ENCODE measurements at regions of chr6 and their contacts with region 1.

Region 1: GRCh38 chr6:10837995-10838793 is at the start of gene MAK:
- DNase-seq: peak; percentile 91
- H3K4me3 Mint-ChIP-seq: peak within 1 kb of the TSS; percentile 73
- H3K27ac Mint-ChIP-seq: peak within 1 kb of the TSS; percentile 98
- H3K4me1 Mint-ChIP-seq: peaks cover 31% of the 10 kb centered on the region
- H3K27me3 Mint-ChIP-seq: peaks cover 40% of the 10 kb centered on the region
- total RNA-seq, gene MAK: 0.87 to 1.1 TPM

Region 2: DNA sequence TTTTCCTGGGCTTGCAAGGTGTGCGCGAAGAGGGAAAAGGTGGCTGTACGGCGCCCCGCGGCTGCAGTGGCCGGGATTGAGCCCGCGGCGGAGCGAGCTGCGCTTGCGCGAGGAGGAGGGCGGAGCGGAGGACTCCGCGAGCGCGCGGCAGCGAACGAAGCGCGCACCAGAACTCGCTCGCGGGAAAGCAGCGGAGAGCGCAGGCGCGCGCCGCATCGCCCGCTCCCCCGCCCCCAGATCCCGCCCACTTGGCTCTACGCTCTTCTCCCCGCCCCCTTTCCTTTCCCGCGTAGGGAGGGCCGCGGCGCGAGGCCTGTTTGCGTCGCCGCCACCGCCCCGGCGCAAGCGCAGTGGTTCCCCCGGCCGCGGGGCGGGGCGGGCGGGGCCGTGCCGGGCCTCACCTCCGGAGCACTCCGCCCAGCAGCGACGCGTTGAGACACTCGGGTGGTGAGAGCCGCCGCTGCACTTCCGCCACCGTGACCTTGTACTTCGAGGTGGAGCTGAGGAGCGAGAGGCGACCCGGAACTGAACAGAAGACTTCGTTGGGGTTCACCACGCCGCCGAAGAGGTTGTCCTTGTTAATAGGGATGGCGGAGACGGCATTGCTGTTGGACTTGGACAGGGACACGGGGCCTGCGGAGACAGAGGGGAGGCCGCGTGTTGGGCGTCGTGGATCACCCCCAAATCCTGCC is 433.9 kb before region 1 on chr6:
- CTCF ChIA-PET with region 1: no interaction called
- POLR2A ChIA-PET with region 1: no interaction called
- intact Hi-C with region 1: loop called (anchors 2 kb)
- DNase-seq: peak; percentile 93
- H3K4me3 Mint-ChIP-seq: peak overlapping the region; percentile 76
- H3K27ac Mint-ChIP-seq: peak overlapping the region; percentile 77
- H3K4me1 Mint-ChIP-seq: peaks cover 10% of the 10 kb centered on the region
- H3K27me3 Mint-ChIP-seq: peaks cover 50% of the 10 kb centered on the region

Region 3: DNA sequence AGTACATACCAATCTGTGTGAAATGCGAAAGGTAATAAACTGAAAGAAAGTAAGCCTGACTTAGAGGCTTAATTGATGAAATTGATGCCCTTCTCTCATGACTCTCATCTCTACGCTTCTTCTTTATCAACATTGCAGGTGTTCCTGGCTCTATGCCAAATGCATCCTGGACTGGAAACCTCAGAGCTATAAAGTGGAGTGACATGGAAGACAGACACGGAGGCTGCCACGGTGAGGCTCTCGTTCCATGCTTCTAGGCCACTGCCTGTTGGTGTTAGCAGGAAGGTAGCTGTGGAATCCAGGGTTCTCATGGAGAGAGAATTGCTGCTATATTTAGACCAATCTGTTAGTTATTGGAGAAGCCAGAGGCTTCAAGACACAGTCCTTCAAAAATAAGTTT is 217.0 kb before region 1 on chr6:
- CTCF ChIA-PET with region 1: no interaction called
- POLR2A ChIA-PET with region 1: no interaction called
- intact Hi-C with region 1: no loop called
- DNase-seq: no peak
- H3K4me3 Mint-ChIP-seq: no peak overlapping the region
- H3K27ac Mint-ChIP-seq: no peak overlapping the region
- H3K4me1 Mint-ChIP-seq: no peaks in the 10 kb centered on the region
- H3K27me3 Mint-ChIP-seq: no peaks in the 10 kb centered on the region

Region 4: DNA sequence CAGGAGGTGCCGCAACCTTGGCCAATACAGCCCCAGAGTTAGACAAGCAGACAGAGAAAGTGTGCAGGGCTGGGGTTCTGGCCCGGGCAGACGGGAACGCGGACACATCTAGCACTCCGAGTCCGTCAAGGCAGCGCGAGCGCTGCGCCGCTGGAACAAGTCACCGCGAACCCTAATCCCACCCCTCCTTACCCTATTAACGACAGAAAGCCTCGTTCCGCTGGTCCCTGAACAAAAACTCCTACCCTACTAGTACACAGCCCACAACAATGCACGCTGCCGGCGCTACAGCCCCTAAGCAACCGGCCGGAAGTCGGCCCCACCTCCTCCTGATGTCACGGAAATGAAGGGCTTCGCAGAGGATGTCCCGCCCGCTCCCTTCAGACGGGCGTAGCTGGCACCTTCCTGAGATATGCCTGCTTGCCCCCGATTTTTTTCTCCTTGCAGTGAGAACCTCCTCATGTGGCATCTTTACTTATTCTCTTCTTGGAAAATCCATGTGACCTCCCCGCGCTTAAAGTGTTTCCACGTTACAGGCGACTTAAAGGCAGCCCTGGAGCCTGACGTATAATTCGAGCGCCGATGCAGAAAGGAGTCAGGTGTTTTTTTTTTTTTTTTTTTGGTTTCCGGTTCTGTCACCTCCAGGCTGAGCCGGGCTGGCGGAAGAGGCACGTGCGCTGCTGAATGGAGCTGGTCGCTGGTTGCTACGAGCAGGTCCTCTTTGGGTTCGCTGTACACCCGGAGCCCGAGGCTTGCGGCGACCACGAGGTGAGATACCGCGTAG is 143.7 kb before region 1 on chr6 and contains the starts of genes C6orf52 and PAK1IP1:
- CTCF ChIA-PET with region 1: no interaction called
- POLR2A ChIA-PET with region 1: interaction called, 4 read pairs
- intact Hi-C with region 1: loop called (anchors 1 kb)
- DNase-seq: peak; percentile 95
- H3K4me3 Mint-ChIP-seq: peak within 1 kb of the TSS; percentile 93
- H3K27ac Mint-ChIP-seq: peak within 1 kb of the TSS; percentile 99
- H3K4me1 Mint-ChIP-seq: peaks cover 32% of the 10 kb centered on the region
- H3K27me3 Mint-ChIP-seq: no peaks in the 10 kb centered on the region
- total RNA-seq, gene C6orf52: 2.4 to 3.7 TPM
- total RNA-seq, gene PAK1IP1: 28.2 to 32.8 TPM

Region 5: GRCh38 chr6:10747251-10747972 is 90.8 kb before region 1 on chr6 and contains the start of gene TMEM14B:
- CTCF ChIA-PET with region 1: no interaction called
- POLR2A ChIA-PET with region 1: interaction called, 4 read pairs
- intact Hi-C with region 1: loop called (anchors 1 kb)
- DNase-seq: peak; percentile 100
- H3K4me3 Mint-ChIP-seq: peak within 1 kb of the TSS; percentile 88
- H3K27ac Mint-ChIP-seq: peak within 1 kb of the TSS; percentile 86
- H3K4me1 Mint-ChIP-seq: peaks cover 47% of the 10 kb centered on the region
- H3K27me3 Mint-ChIP-seq: no peaks in the 10 kb centered on the region
- total RNA-seq, gene TMEM14B: 86.9 to 91.3 TPM

Region 6: GRCh38 chr6:11025921-11026635 is 187.9 kb after region 1 on chr6:
- CTCF ChIA-PET with region 1: no interaction called
- POLR2A ChIA-PET with region 1: no interaction called
- intact Hi-C with region 1: no loop called
- DNase-seq: no peak
- H3K4me3 Mint-ChIP-seq: no peak overlapping the region
- H3K27ac Mint-ChIP-seq: no peak overlapping the region
- H3K4me1 Mint-ChIP-seq: no peaks in the 10 kb centered on the region
- H3K27me3 Mint-ChIP-seq: peaks cover 27% of the 10 kb centered on the region

Region 7: GRCh38 chr6:11317885-11318771 is 479.9 kb after region 1 on chr6:
- CTCF ChIA-PET with region 1: no interaction called
- POLR2A ChIA-PET with region 1: no interaction called
- intact Hi-C with region 1: loop called (anchors 1 kb)
- DNase-seq: peak; percentile 88
- H3K4me3 Mint-ChIP-seq: peak overlapping the region; percentile 14
- H3K27ac Mint-ChIP-seq: peak overlapping the region; percentile 92
- H3K4me1 Mint-ChIP-seq: peaks cover 63% of the 10 kb centered on the region
- H3K27me3 Mint-ChIP-seq: no peaks in the 10 kb centered on the region